Activated B cell treated with CpG ODN at 0.5 μM for 24 hours (primary cell): ENCODE measurements at regions of chr3 and their contacts with region 1.

Region 1: GRCh38 chr3:3069723-3070122 is 40.5 kb downstream of the IL5RA start:
- DNase-seq: no peak
- ATAC-seq: no peak
- H3K4me3 Mint-ChIP-seq: no peak overlapping the region
- H3K27ac Mint-ChIP-seq: no peak overlapping the region
- H3K4me1 Mint-ChIP-seq: peaks cover 13% of the 10 kb centered on the region
- H3K27me3 Mint-ChIP-seq: no peaks in the 10 kb centered on the region
- CTCF ChIP-seq: no peak

Region 2: DNA sequence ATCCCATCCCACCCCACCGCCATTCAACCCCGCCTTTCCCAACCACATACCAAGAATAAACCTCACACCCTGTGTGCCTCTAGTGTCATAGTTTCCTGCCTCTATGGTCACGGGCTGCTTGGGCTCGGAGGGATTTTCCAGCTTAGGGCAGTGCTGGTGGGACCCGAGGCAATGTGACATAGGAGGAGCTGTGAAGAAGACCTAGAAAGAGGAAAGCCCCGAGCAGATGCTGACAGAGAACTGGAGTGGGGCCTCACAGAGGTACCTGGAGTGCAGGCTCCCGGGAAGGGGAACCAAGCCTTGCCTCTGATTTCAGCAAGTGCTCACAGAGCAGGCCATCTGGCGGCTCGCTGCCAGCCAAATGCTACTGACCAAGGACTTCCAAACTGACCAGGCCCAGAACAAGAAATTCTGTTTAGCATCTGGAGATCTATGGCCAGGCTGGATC is 1937.1 kb after region 1 on chr3:
- CTCF ChIA-PET with region 1: no interaction called
- POLR2A ChIA-PET with region 1: interaction called, 11 read pairs
- intact Hi-C with region 1: no loop called
- DNase-seq: peak; percentile 58
- ATAC-seq: peak; percentile 62
- H3K4me3 Mint-ChIP-seq: peak overlapping the region; percentile 62
- H3K27ac Mint-ChIP-seq: peak overlapping the region; percentile 84
- H3K4me1 Mint-ChIP-seq: peaks cover 67% of the 10 kb centered on the region
- H3K27me3 Mint-ChIP-seq: no peaks in the 10 kb centered on the region
- CTCF ChIP-seq: no peak